AG04449 (cell line): ENCODE measurements at regions of chr14 and their contacts with region 1.

Region 1: DNA sequence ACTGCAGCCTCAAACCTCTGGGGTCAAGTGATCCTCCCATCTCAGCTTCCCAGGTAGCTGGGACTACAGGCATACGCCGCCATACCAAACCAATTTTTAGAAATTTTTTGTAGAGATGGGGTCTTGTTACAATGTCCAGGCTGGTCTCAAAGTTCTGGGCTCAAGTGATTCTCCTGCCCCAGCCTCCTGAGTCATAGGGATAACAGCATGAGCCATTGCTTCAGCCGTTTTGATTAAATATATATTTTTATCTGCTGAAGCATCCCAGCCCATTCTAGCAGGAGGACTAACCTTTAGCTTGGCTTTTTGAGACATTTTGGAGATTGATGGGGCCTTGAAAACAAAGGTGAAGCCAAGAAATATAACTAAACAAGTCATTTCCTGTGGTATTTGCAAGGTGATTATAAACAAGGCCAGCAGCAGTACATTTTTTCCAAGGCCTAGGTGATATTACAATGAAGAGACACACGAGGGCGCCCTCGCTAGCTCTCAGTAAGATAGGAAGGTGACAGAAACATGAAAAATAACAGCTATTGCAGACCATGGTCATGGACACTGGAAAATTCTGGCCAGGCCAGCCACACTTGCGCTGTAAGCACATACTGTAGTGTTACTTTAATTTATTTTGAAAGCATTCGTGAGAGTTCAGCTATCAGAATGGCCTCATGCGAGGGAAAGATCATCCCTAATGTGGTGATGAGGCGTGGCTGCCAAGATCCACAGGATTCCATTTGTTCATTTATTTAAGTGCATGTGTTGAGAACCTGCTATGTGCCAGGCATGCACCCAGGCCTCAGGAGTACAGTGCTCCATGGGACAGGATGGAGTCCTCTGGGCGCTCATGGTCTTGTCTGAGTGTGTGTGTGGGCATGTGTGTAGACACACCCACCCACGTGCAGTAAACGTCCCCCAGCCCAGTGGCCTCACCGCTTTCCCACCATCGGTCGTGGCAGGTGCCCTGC is 63.5 kb downstream of the DGLUCY start:
- DNase-seq: no peak
- H3K4me3 ChIP-seq: no peak overlapping the region
- CTCF ChIP-seq: peak; percentile 76

Region 2: DNA sequence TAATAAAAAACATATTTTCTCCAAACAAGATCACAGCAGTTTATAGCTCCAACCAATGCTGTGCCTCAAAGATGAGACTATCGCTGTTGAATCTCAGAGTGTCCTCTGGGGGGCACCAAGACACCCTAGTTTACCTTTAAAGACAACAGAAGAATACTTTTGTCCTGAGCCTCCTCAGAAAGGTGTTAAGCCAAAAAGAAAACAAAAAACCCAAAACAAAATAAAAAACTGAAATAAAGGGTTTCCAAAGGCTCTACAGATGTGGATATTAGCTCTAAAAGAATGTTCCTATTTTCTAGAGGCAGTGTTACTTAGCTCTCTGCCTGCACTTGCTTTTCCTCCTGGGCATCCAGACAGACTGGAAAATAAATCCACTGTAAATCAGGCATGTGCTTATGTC is 274.3 kb before region 1 on chr14:
- CTCF ChIA-PET with region 1: interaction called, 432 read pairs
- POLR2A ChIA-PET with region 1: no interaction called
- DNase-seq: peak; percentile 7
- H3K4me3 ChIP-seq: no peak overlapping the region
- CTCF ChIP-seq: peak; percentile 58

Region 3: DNA sequence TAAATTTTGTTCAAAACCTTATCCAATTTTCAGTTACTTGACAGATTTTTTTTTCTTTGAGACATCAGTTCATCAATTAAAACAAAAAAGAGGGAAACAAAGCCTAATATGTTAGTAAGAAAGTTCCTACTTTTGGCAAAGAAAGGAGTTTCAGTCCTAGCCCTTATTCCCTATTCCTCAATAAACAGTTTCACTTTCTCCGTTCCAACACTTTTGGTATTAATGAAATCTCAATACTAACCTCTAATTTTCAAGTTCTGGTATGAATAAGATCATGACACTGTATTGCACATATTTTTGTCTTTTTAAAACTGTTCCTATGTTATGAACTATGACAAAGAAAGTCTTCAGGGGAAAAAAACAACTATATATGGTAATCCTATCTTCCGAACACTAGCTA is 165.3 kb before region 1 on chr14:
- CTCF ChIA-PET with region 1: no interaction called
- POLR2A ChIA-PET with region 1: no interaction called
- DNase-seq: no peak
- H3K4me3 ChIP-seq: no peak overlapping the region
- CTCF ChIP-seq: no peak

Region 4: GRCh38 chr14:91059576-91060350 is 117.6 kb before region 1 on chr14:
- CTCF ChIA-PET with region 1: interaction called, 10 read pairs
- POLR2A ChIA-PET with region 1: no interaction called
- DNase-seq: no peak
- H3K4me3 ChIP-seq: peak overlapping the region; percentile 86
- CTCF ChIP-seq: peak; percentile 21

Region 5: GRCh38 chr14:91154851-91155625 is 22.3 kb before region 1 on chr14:
- CTCF ChIA-PET with region 1: interaction called, 20 read pairs
- POLR2A ChIA-PET with region 1: no interaction called
- DNase-seq: no peak
- H3K4me3 ChIP-seq: no peak overlapping the region
- CTCF ChIP-seq: no peak

Region 6: GRCh38 chr14:91193069-91193468 is 15.7 kb after region 1 on chr14:
- CTCF ChIA-PET with region 1: interaction called, 103 read pairs
- POLR2A ChIA-PET with region 1: no interaction called
- DNase-seq: no peak
- H3K4me3 ChIP-seq: no peak overlapping the region
- CTCF ChIP-seq: no peak

Region 7: DNA sequence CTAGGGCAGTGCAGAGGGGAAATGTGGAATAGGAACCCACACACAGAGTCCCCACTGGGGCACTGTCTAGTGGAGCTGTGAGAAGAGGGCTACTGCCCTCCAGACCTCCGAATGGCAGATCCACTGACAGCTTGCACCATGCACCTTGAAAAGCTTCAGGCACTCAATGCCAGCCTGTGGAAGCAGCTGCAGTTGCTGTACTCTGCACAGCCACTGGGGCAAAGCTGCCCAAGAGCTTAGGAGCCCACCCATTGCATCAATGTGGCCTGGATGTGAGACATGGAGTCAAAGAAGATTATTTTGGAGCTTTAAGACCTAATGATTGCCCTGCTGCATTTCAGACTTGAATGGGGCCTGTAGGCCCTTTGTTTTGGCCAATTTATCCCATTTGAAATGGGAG is 262.0 kb after region 1 on chr14:
- CTCF ChIA-PET with region 1: no interaction called
- POLR2A ChIA-PET with region 1: no interaction called
- DNase-seq: no peak
- H3K4me3 ChIP-seq: no peak overlapping the region
- CTCF ChIP-seq: no peak

Region 8: GRCh38 chr14:91521061-91521640 is 343.8 kb after region 1 on chr14:
- CTCF ChIA-PET with region 1: no interaction called
- POLR2A ChIA-PET with region 1: no interaction called
- DNase-seq: no peak
- H3K4me3 ChIP-seq: no peak overlapping the region
- CTCF ChIP-seq: no peak